SK-N-SH (cell line): ENCODE measurements at regions of chr7 and their contacts with region 1.

Region 1: DNA sequence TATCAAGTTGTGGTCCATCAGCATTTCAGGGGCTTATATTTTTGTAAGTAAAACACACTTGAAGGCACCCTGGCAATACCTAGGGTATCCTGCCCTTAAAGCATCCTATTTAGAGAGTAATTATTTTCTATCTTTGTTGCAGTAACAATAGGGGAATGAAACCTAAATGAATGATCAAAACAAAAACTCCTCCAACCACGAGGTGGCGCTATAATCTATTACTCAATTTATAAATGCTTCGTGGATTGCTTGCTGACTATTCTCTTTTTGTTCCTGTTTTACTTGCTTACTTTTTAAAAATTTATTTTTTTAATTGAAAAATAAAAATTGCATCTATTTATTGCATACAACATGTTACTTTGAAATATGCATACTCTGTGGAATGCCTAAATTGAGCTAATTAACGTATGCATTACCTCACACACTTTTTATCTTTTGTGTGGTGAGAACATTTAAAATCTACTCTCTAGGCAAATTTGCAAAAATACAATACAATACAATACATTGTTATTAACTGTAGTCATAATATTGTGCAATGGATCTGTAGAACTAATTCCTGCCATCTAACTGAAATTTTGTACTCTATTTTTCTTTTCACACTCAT is 147.7 kb upstream of the BMPER start:
- DNase-seq: peak; percentile 45
- H3K4me3 ChIP-seq: no peak overlapping the region
- H3K27ac ChIP-seq: no peak overlapping the region
- H3K4me1 ChIP-seq: peaks cover 7 to 11% of the 10 kb centered on the region in 2 experiments; a peak in 3 of 4 replicates
- H3K27me3 ChIP-seq: no peaks in the 10 kb centered on the region
- CTCF ChIP-seq: peak; percentile 92
- EP300 ChIP-seq: no peak
- RAD21 ChIP-seq: peak; percentile 77

Region 2: GRCh38 chr7:33744293-33745075 is 13.2 kb before region 1 on chr7:
- CTCF ChIA-PET with region 1: interaction called, 11 read pairs
- POLR2A ChIA-PET with region 1: no interaction called
- DNase-seq: no peak
- H3K4me3 ChIP-seq: no peak overlapping the region
- H3K27ac ChIP-seq: no peak overlapping the region
- H3K4me1 ChIP-seq: no peaks in the 10 kb centered on the region
- H3K27me3 ChIP-seq: no peaks in the 10 kb centered on the region
- CTCF ChIP-seq: peak; percentile 43
- EP300 ChIP-seq: no peak
- RAD21 ChIP-seq: peak; percentile 45; the same call in 1 of the 2 replicates

Region 3: GRCh38 chr7:33771422-33771821 is 13.8 kb after region 1 on chr7:
- CTCF ChIA-PET with region 1: interaction called, 26 read pairs
- POLR2A ChIA-PET with region 1: no interaction called
- DNase-seq: no peak
- H3K4me3 ChIP-seq: no peak overlapping the region
- H3K27ac ChIP-seq: no peak overlapping the region
- H3K4me1 ChIP-seq: no peaks in the 10 kb centered on the region; a peak in 1 of 4 replicates
- H3K27me3 ChIP-seq: no peaks in the 10 kb centered on the region
- CTCF ChIP-seq: no peak
- EP300 ChIP-seq: no peak
- RAD21 ChIP-seq: no peak

Region 4: DNA sequence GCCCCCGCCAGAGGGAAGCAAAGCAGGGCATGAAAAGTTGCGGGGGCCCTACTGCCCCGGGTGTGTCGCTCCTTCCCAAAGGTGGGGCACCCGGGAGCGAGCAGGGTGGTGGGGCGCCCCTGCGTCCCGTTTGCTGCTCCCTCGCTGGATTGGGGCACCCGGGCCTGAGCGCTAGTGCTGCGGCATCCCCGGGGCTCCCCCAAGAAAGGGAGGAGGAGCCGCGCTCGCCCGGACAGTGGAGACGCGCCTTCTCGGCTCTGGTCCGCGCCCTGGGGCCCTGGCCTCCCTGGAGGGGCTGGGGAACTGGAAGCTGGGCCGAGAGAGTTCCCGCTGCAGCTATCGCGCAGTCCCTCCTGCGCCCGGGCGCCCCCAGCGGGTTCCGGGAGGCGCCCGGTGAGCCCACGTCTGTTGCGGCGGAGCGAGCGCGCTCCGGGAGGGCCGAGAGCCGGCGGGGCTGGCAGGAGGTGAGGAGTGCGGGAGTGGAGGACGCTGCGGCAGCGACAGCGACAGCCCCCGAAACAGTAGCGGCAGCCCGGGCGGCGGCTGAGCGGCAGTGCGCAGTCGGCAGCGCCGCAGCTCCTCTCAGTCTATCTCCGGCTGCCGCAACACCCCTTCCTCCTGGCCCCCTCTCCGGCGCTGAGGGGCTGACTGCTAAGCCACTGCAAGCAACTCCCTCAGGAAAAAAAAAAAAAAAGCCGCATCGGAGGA is 147.2 kb after region 1 on chr7:
- CTCF ChIA-PET with region 1: interaction called, 17 read pairs
- POLR2A ChIA-PET with region 1: no interaction called
- DNase-seq: peak; percentile 84
- H3K4me3 ChIP-seq: peak overlapping the region; percentile 80 to 86
- H3K27ac ChIP-seq: peak overlapping the region in 1 of 2 experiments; percentile 66; a peak in 2 of 4 replicates
- H3K4me1 ChIP-seq: peaks cover 17 to 21% of the 10 kb centered on the region in 2 experiments; a peak in 3 of 4 replicates
- H3K27me3 ChIP-seq: no peaks in the 10 kb centered on the region
- CTCF ChIP-seq: peak; percentile 45
- EP300 ChIP-seq: peak in 1 of 2 experiments; percentile 27; a peak in 1 of 4 replicates
- RAD21 ChIP-seq: no peak

Region 5: GRCh38 chr7:34153656-34154270 is 396.1 kb after region 1 on chr7:
- CTCF ChIA-PET with region 1: no interaction called
- POLR2A ChIA-PET with region 1: no interaction called
- DNase-seq: no peak
- H3K4me3 ChIP-seq: no peak overlapping the region
- H3K27ac ChIP-seq: no peak overlapping the region
- H3K4me1 ChIP-seq: peaks cover 0 to 29% of the 10 kb centered on the region in 2 experiments; a peak in 3 of 4 replicates
- H3K27me3 ChIP-seq: no peaks in the 10 kb centered on the region
- CTCF ChIP-seq: no peak
- EP300 ChIP-seq: no peak
- RAD21 ChIP-seq: no peak